B cell (primary cell): ENCODE measurements at regions of chr1 and their contacts with region 1.

Region 1: GRCh38 chr1:156728597-156729462 is at the start of gene ISG20L2:
- DNase-seq: peak; percentile 98
- ATAC-seq: peak; percentile 91
- H3K4me3 ChIP-seq: peak within 1 kb of the TSS; percentile 79 to 98 (median 95)
- H3K4me3 Mint-ChIP-seq: no peak within 1 kb of the TSS
- H3K27ac ChIP-seq: peak within 1 kb of the TSS; percentile 77 to 96
- H3K27ac Mint-ChIP-seq: peak within 1 kb of the TSS; percentile 98
- H3K4me1 ChIP-seq: peaks cover 40 to 48% of the 10 kb centered on the region in 2 donors
- H3K4me1 Mint-ChIP-seq: peaks cover 23% of the 10 kb centered on the region
- H3K27me3 ChIP-seq: no peaks in the 10 kb centered on the region
- H3K27me3 Mint-ChIP-seq: no peaks in the 10 kb centered on the region
- CTCF ChIP-seq: no peak
- total RNA-seq, gene ISG20L2: 51.7 and 52.5 TPM in 2 replicates

Region 2: DNA sequence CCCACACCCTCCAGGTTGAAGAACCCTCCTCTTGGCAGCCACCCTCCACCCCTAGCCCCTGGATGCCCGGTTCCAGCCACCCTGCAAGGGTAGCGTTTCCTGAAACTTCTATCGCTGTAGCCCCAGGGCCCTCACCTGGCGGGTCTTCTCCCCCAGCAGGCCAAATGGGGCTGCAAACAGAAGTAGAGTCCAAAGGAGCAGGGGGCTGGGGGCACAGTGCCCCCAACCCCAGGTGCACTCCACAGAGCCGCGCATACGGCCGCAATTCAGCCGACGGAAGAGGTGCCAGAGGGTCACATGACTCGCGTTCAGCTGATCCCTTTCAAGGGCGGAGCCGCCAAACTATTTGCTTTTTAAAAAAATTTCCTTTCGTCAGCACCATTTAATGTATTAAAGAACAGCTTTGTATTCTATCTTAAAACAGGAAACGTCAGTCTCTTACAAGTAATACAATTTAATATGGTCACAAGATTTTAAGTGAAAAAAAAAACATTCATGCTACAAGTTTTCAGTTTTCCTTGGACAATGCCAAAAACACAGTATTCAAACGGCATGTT is 433.4 kb before region 1 on chr1 and contains the start of gene GLMP:
- CTCF ChIA-PET with region 1: no interaction called
- POLR2A ChIA-PET with region 1: no interaction called
- intact Hi-C with region 1: no loop called
- DNase-seq: peak; percentile 70
- ATAC-seq: peak; percentile 60
- H3K4me3 ChIP-seq: peak within 1 kb of the TSS; percentile 54 to 78 (median 70)
- H3K4me3 Mint-ChIP-seq: peak within 1 kb of the TSS; percentile 92
- H3K27ac ChIP-seq: peak within 1 kb of the TSS in 1 of 2 donors; percentile 58
- H3K27ac Mint-ChIP-seq: peak within 1 kb of the TSS; percentile 80
- H3K4me1 ChIP-seq: peaks cover 12 to 20% of the 10 kb centered on the region in 2 donors
- H3K4me1 Mint-ChIP-seq: peaks cover 20% of the 10 kb centered on the region
- H3K27me3 ChIP-seq: peaks cover 0 to 2% (median 0%) of the 10 kb centered on the region in 4 experiments
- H3K27me3 Mint-ChIP-seq: no peaks in the 10 kb centered on the region
- CTCF ChIP-seq: no peak
- total RNA-seq, gene GLMP: 21.2 and 21.3 TPM in 2 replicates

Region 3: GRCh38 chr1:156394835-156395461 is 333.9 kb before region 1 on chr1:
- CTCF ChIA-PET with region 1: no interaction called
- POLR2A ChIA-PET with region 1: no interaction called
- intact Hi-C with region 1: no loop called
- DNase-seq: peak; percentile 43
- ATAC-seq: peak; percentile 33
- H3K4me3 ChIP-seq: no peak overlapping the region
- H3K4me3 Mint-ChIP-seq: no peak overlapping the region
- H3K27ac ChIP-seq: no peak overlapping the region
- H3K27ac Mint-ChIP-seq: no peak overlapping the region
- H3K4me1 ChIP-seq: peaks cover 0 to 5% of the 10 kb centered on the region in 2 donors
- H3K4me1 Mint-ChIP-seq: peaks cover 12% of the 10 kb centered on the region
- H3K27me3 ChIP-seq: peaks cover 0 to 14% (median 2%) of the 10 kb centered on the region in 4 experiments
- H3K27me3 Mint-ChIP-seq: peaks cover 9% of the 10 kb centered on the region
- CTCF ChIP-seq: no peak

Region 4: DNA sequence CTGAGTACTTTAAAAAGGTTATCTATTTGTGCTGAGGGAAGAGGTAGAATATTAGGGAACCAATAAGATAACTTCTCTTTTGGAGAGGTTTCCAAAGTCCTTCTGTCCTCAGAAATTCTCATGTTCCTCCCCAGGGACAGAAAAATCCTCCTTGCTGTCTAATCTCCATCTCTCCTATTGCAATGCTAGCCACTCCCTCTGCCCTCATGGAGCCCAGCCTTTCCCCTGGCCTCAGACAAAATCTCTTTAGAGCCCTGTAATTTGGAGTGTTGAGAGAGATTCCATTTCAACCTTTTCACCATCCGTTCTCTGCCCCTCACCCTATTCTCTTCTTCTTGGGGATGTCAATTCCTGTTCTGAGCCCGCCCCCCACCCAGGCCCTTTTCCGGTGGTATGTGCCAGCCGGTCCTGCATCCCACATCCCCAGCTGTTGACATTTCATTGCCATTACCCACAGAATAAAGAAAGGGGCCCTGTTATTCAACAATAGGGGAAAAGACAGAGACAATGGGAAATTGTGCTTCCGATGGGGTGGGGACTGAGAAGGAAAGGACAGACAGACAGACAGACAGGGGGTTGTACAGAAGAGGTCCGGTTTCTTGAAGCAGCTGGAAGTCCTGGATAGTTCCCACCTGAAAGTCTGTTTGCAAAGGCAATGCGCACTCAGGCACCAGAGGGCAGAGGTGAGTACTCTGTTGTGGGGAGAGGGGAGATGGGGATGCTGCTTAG is 109.8 kb before region 1 on chr1 and contains the start of gene HAPLN2:
- CTCF ChIA-PET with region 1: interaction called, 12 read pairs
- POLR2A ChIA-PET with region 1: no interaction called
- intact Hi-C with region 1: no loop called
- DNase-seq: peak; percentile 39
- ATAC-seq: peak; percentile 49
- H3K4me3 ChIP-seq: no peak within 1 kb of the TSS
- H3K4me3 Mint-ChIP-seq: no peak within 1 kb of the TSS
- H3K27ac ChIP-seq: no peak within 1 kb of the TSS
- H3K27ac Mint-ChIP-seq: no peak within 1 kb of the TSS
- H3K4me1 ChIP-seq: peaks cover 4 to 6% of the 10 kb centered on the region in 2 donors
- H3K4me1 Mint-ChIP-seq: peaks cover 4% of the 10 kb centered on the region
- H3K27me3 ChIP-seq: peaks cover 0 to 66% (median 24%) of the 10 kb centered on the region in 4 experiments
- H3K27me3 Mint-ChIP-seq: peaks cover 65% of the 10 kb centered on the region
- CTCF ChIP-seq: peak; percentile 33
- total RNA-seq, gene HAPLN2: 0.36 TPM in 1 of 2 replicates, not detected in the other

Region 5: DNA sequence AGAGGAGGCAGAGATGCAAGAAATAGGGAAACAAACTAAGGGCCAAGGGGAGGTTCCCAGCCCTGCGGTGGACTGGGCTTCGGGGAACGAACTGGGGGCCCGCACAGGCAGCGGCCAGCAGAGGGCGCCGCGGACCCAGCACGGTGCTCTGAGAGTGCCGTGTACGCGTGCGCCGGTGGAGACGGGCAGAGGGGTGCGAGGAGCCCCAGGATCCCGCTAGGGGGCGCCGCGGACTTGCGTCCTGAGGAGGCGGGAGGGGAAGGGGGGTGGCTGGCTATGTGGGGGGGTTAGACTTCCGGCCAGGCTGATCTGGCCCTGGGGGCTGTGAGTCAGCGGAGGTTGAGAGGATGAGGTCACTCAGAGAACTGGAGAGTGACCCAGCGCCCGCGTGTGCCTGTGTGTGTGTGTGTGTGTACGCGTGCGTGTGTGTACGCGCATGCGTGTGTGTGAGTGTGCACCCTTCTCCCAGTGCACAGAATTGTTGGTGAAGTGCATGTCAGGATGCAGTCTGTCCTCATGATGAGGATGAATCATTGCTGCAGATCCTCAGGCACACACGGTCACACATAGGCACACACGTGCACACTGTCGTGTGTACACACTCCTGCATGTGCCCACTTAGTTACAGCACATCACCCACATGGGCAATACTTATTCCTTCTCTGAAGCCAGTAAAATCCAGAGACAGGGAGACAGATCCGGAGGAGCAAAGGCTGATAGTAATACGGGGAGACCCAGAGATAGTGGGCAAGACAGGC is 68.7 kb before region 1 on chr1:
- CTCF ChIA-PET with region 1: interaction called, 14 read pairs
- POLR2A ChIA-PET with region 1: interaction called, 3 read pairs
- intact Hi-C with region 1: no loop called
- DNase-seq: peak; percentile 92
- ATAC-seq: peak; percentile 83
- H3K4me3 ChIP-seq: no peak overlapping the region
- H3K4me3 Mint-ChIP-seq: peak overlapping the region; percentile 66
- H3K27ac ChIP-seq: no peak overlapping the region
- H3K27ac Mint-ChIP-seq: peak overlapping the region; percentile 69
- H3K4me1 ChIP-seq: peaks cover 78 to 89% of the 10 kb centered on the region in 2 donors
- H3K4me1 Mint-ChIP-seq: peaks cover 91% of the 10 kb centered on the region
- H3K27me3 ChIP-seq: peaks cover 0 to 30% (median 11%) of the 10 kb centered on the region in 4 experiments
- H3K27me3 Mint-ChIP-seq: peaks cover 25% of the 10 kb centered on the region
- CTCF ChIP-seq: peak; percentile 99

Region 6: DNA sequence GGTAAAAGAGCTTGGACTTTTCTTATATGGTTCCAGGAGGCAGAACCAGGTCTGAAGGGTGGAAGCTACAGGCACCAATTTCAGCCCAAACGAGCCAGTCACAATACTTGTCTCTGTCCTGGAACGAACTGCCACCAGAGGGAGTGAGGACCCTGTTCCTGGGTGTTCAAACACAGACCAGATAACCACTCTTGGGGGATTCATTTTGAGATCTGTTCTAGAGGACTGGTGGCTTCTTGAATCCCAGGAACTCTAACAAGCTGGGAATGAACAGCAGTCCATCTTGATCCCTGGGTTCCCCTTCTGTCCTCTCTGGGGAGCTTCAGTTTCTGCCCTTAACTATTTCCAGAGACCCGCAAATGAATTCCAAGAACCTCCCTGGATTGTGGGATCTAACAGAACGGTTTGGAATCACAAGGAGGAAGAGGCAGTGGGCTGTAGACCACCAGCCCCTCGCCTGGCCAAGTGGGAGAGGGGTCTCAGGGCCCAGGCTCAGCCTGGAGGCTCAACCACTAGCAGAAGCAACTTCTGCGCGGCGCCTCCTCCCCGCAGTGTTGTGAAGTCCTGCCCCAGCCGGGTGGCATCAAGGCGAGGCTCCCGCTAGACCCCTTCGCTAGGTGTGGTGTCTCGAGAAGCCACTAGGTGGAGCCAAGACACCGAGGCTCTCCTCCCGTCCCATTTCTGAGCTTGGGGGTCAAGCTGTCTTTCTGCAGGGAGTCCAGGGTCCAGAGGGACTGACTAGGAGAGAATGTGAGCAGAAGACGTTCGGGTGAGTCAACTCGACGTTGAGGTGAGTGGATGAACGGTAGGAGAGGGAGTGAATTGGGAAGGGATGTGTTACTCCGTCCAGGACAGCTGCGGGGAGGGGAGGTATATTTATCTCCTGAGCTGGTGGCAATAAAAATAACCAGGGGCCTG is 39.5 kb before region 1 on chr1:
- CTCF ChIA-PET with region 1: interaction called, 245 read pairs
- POLR2A ChIA-PET with region 1: interaction called, 7 read pairs
- intact Hi-C with region 1: loop called (anchors 1 kb)
- DNase-seq: peak; percentile 85
- ATAC-seq: peak; percentile 98
- H3K4me3 ChIP-seq: no peak overlapping the region
- H3K4me3 Mint-ChIP-seq: no peak overlapping the region
- H3K27ac ChIP-seq: no peak overlapping the region
- H3K27ac Mint-ChIP-seq: no peak overlapping the region
- H3K4me1 ChIP-seq: peaks cover 11 to 25% of the 10 kb centered on the region in 2 donors
- H3K4me1 Mint-ChIP-seq: peaks cover 19% of the 10 kb centered on the region
- H3K27me3 ChIP-seq: peaks cover 0 to 68% (median 31%) of the 10 kb centered on the region in 4 experiments
- H3K27me3 Mint-ChIP-seq: peaks cover 48% of the 10 kb centered on the region
- CTCF ChIP-seq: peak; percentile 95

Region 7: DNA sequence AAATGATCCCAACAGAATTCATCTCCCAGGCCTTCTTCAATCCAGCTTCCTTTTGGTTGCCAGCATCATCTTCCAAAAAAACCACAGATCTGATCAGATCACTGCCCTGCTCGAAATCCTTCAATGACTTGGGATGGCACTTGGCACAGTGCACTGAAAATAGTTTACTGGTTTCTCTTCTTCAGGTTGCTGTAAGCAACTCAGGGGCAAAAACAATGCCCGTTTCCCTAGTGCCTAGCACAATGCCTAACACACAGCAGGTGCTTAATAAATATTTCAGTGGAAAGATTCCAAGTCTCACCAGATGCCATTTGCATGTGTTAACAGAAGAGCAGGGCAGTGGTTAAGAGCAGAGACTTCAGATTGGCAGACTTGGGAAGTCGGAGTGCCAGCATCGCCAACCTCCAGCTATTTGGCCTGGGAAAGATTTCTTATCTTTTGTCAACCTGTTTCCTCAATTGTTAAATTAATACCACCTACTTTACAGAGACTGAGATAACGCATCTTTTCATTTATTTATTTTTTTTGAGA is 11.5 kb before region 1 on chr1:
- CTCF ChIA-PET with region 1: interaction called, 13 read pairs
- POLR2A ChIA-PET with region 1: interaction called, 3 read pairs
- intact Hi-C with region 1: no loop called
- DNase-seq: no peak
- ATAC-seq: no peak
- H3K4me3 ChIP-seq: no peak overlapping the region
- H3K4me3 Mint-ChIP-seq: no peak overlapping the region
- H3K27ac ChIP-seq: no peak overlapping the region
- H3K27ac Mint-ChIP-seq: no peak overlapping the region
- H3K4me1 ChIP-seq: no peaks in the 10 kb centered on the region
- H3K4me1 Mint-ChIP-seq: peaks cover 2% of the 10 kb centered on the region
- H3K27me3 ChIP-seq: no peaks in the 10 kb centered on the region
- H3K27me3 Mint-ChIP-seq: no peaks in the 10 kb centered on the region
- CTCF ChIP-seq: no peak

Region 8: GRCh38 chr1:156751758-156752757 is 23.2 kb after region 1 on chr1:
- CTCF ChIA-PET with region 1: interaction called, 24 read pairs
- POLR2A ChIA-PET with region 1: interaction called, 29 read pairs
- intact Hi-C with region 1: loop called (anchors 1 kb)
- DNase-seq: peak; percentile 95
- ATAC-seq: peak; percentile 88
- H3K4me3 ChIP-seq: peak overlapping the region; percentile 72 to 95 (median 86)
- H3K4me3 Mint-ChIP-seq: peak overlapping the region; percentile 93
- H3K27ac ChIP-seq: peak overlapping the region; percentile 58 to 82
- H3K27ac Mint-ChIP-seq: peak overlapping the region; percentile 94
- H3K4me1 ChIP-seq: peaks cover 46 to 62% of the 10 kb centered on the region in 2 donors
- H3K4me1 Mint-ChIP-seq: peaks cover 63% of the 10 kb centered on the region
- H3K27me3 ChIP-seq: no peaks in the 10 kb centered on the region
- H3K27me3 Mint-ChIP-seq: no peaks in the 10 kb centered on the region
- CTCF ChIP-seq: no peak

Region 9: DNA sequence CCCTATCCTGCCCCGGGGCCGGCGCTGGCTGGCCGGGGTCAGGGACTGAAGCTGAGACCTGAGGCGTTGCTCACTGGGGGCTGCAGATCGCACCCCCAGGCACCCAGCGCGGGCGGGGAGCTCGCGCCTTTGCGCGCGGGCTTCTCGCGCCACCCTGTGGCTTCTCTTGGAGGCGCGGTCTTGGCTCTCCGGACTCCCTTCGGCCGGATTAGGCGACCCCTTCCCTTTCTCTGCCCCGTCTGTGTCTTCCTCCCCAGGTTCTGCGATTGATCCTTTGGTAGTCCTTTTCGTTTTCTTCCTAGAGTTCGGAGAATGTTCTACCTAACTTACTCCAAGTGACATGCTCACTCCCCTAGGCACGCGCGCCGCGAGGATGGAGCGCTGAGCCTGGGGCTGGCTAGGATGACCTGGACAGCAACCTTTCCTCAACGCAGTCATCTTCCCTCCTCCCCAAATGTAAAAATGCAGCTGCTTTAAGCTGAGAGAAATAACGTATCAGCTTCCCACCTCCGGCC is 131.3 kb after region 1 on chr1:
- CTCF ChIA-PET with region 1: interaction called, 37 read pairs
- POLR2A ChIA-PET with region 1: interaction called, 4 read pairs
- intact Hi-C with region 1: no loop called
- DNase-seq: peak; percentile 71
- ATAC-seq: peak; percentile 73
- H3K4me3 ChIP-seq: peak overlapping the region in 4 of 5 experiments; percentile 15 to 54 (median 44)
- H3K4me3 Mint-ChIP-seq: peak overlapping the region; percentile 83
- H3K27ac ChIP-seq: no peak overlapping the region
- H3K27ac Mint-ChIP-seq: no peak overlapping the region
- H3K4me1 ChIP-seq: peaks cover 23 to 30% of the 10 kb centered on the region in 2 donors
- H3K4me1 Mint-ChIP-seq: peaks cover 18% of the 10 kb centered on the region
- H3K27me3 ChIP-seq: peaks cover 0 to 80% (median 39%) of the 10 kb centered on the region in 4 experiments
- H3K27me3 Mint-ChIP-seq: peaks cover 67% of the 10 kb centered on the region
- CTCF ChIP-seq: peak; percentile 73